Dorsolateral prefrontal cortex (tissue), 120 donors: ENCODE measurements at regions of chr9 and their contacts with region 1.

Region 1: GRCh38 chr9:16133556-16134227 is 580.8 kb downstream of the CCDC171 start:
- DNase-seq: peak in 3 of 10 donors; percentile 31 to 53 (median 48)
- H3K4me3 ChIP-seq: peak overlapping the region in 5 of 59 donors; percentile 17 to 51 (median 24)
- H3K27ac ChIP-seq: no peak overlapping the region
- H3K27me3 ChIP-seq: peaks cover 0 to 10% (median 0%) of the 10 kb centered on the region in 45 donors
- CTCF ChIP-seq: peak; percentile 44 to 81 (median 66)

Region 2: GRCh38 chr9:15873569-15874177 is 260.0 kb before region 1 on chr9:
- intact Hi-C with region 1: loop called in 1 of 2 experiments (anchors 2 kb)
- DNase-seq: no peak
- H3K4me3 ChIP-seq: no peak overlapping the region
- H3K27ac ChIP-seq: no peak overlapping the region
- H3K27me3 ChIP-seq: no peaks in the 10 kb centered on the region
- CTCF ChIP-seq: peak; percentile 68 to 96 (median 79)